Activated naive CD4-positive, alpha-beta T cell treated with anti-CD3 and anti-CD28 coated beads for 36 hours (primary cell): ENCODE measurements at regions of chr20 and their contacts with region 1.

Region 1: GRCh38 chr20:53652090-53652858 is 58.6 kb upstream of the ZNF217 start:
- DNase-seq: peak; percentile 26
- H3K4me3 Mint-ChIP-seq: peak overlapping the region; percentile 65
- H3K27ac Mint-ChIP-seq: peak overlapping the region; percentile 93
- H3K4me1 Mint-ChIP-seq: peaks cover 43% of the 10 kb centered on the region
- H3K27me3 Mint-ChIP-seq: no peaks in the 10 kb centered on the region

Region 2: DNA sequence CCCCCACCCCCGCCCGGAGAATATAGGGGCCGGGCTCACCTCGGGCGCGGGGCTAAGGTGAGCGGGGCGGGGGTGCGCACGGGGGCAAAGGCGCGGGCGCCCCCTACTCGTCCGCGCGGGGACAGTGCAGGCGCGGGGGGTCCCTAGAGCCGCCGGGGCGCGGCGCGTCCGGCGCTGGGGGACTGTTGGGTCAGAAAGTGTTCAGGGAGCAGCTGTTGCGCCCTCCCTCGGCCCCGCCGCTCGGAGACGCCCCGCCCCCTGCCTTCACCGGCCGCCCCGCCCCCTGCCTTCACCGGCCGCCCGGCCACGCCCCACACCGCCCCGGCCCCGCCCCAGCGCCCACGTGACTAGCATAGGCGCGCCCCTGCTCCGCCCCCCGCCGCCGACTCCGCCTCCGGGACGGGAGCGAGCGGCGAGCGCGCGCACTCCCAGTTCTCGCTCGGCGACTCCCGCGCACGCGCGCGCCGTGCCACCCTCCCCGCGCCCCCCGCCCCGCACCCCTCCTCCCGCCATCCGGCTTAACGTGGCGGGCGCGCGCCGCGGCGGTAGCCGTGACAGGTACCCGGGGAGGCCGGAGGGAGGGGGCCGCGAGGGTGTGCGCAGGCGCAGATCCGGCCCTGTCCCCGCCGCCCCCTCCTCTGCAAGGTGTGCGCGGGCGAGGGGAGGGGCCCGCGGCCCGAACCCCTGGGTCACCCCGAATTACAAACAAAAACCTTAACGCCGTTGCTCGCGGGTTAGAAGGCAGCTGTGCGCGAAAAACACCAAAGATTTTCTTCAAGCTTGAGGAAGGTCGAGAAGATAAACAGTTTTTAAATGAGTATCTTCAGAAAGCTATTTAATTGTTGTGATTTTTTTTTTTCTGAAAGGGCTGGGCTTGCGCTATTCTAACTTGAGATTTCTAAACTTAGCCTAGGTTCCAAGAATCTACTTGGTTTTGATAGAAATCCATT is 57.9 kb before region 1 on chr20:
- CTCF ChIA-PET with region 1: no interaction called
- intact Hi-C with region 1: loop called (anchors 2 kb)
- DNase-seq: peak; percentile 96
- H3K4me3 Mint-ChIP-seq: peak overlapping the region; percentile 94
- H3K27ac Mint-ChIP-seq: peak overlapping the region; percentile 99
- H3K4me1 Mint-ChIP-seq: peaks cover 51% of the 10 kb centered on the region
- H3K27me3 Mint-ChIP-seq: no peaks in the 10 kb centered on the region

Region 3: DNA sequence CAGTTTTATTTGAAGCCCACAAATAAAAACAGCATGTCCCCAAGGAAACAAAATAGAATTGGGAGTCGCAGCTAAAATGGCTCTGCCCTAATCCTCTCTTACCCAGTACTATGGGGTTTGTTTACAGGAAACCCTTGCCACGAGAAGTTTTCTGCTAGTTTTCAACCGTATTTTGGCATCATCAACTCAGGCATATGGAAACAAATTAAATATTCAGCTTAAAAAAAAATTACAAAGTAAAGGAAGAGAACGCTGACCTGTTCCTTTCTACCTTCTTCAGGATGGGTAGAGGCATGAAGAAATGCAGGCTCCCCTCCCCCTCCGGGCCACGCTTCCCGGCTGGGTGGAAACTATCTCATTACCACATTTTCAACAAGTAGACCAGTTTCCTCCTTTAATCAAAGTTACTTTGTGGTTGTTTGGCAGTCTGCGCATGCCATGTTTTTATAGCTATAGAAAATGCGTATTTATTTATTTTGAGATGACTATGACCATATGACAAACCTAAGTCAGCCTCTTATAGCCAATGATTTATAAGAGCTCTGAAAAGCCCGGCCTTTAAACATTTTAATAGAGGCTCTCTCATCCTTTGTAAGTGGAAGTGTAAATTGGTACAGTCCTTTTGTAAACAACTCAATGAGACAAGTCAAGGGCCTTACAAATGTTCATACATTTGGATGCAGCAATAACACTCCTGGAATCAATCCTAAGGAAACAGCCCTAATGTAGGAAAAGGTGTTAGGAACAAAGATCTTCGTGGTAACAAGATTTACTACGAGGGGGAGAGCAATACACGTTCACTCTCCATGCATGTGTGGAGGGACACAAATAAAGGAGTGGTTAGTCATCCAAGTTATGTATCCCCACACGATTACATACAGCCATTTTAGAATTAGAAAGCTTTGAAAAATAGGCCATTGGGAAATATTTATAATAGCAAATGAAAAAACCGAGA is 42.5 kb before region 1 on chr20:
- CTCF ChIA-PET with region 1: no interaction called
- intact Hi-C with region 1: loop called (anchors 2 kb)
- DNase-seq: peak; percentile 91
- H3K4me3 Mint-ChIP-seq: peak overlapping the region; percentile 79
- H3K27ac Mint-ChIP-seq: peak overlapping the region; percentile 98
- H3K4me1 Mint-ChIP-seq: peaks cover 33% of the 10 kb centered on the region
- H3K27me3 Mint-ChIP-seq: no peaks in the 10 kb centered on the region

Region 4: GRCh38 chr20:53692413-53693067 is 40.3 kb after region 1 on chr20:
- CTCF ChIA-PET with region 1: no interaction called
- intact Hi-C with region 1: loop called (anchors 2 kb)
- DNase-seq: no peak
- H3K4me3 Mint-ChIP-seq: peak overlapping the region; percentile 17
- H3K27ac Mint-ChIP-seq: no peak overlapping the region
- H3K4me1 Mint-ChIP-seq: peaks cover 38% of the 10 kb centered on the region
- H3K27me3 Mint-ChIP-seq: no peaks in the 10 kb centered on the region